Activated CD4-positive, alpha-beta memory T cell treated with anti-CD3 and anti-CD28 coated beads for 36 hours (primary cell): ENCODE measurements at regions of chr15 and their contacts with region 1.

Region 1: DNA sequence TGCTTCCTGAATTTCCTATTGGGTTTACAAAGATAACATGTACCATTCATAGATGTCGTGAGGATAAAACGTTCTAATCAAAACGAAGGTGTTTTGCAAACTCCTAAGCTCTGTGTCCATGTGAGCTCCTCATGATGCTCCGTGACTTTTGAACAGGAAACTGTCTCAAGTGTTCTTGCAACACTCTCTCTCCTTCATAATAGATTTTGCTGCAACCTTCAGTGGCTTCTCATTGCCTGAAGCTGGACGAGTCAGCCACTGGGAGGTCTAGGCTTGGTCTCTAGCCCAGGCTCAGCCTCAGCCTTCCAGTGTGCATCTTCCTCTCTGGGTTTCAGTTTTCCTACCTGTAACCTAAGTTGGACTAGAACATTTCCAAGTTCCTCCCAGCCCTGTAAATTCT is 18.7 kb upstream of the BCL2A1 start:
- DNase-seq: no peak
- H3K4me3 Mint-ChIP-seq: no peak overlapping the region
- H3K27ac Mint-ChIP-seq: no peak overlapping the region
- H3K4me1 Mint-ChIP-seq: peaks cover 3% of the 10 kb centered on the region
- H3K27me3 Mint-ChIP-seq: no peaks in the 10 kb centered on the region

Region 2: GRCh38 chr15:79769069-79769481 is 220.6 kb before region 1 on chr15:
- CTCF ChIA-PET with region 1: no interaction called
- POLR2A ChIA-PET with region 1: no interaction called
- intact Hi-C with region 1: loop called (anchors 2 kb)
- DNase-seq: peak; percentile 10
- H3K4me3 Mint-ChIP-seq: no peak overlapping the region
- H3K27ac Mint-ChIP-seq: no peak overlapping the region
- H3K4me1 Mint-ChIP-seq: no peaks in the 10 kb centered on the region
- H3K27me3 Mint-ChIP-seq: peaks cover 2% of the 10 kb centered on the region

Region 3: DNA sequence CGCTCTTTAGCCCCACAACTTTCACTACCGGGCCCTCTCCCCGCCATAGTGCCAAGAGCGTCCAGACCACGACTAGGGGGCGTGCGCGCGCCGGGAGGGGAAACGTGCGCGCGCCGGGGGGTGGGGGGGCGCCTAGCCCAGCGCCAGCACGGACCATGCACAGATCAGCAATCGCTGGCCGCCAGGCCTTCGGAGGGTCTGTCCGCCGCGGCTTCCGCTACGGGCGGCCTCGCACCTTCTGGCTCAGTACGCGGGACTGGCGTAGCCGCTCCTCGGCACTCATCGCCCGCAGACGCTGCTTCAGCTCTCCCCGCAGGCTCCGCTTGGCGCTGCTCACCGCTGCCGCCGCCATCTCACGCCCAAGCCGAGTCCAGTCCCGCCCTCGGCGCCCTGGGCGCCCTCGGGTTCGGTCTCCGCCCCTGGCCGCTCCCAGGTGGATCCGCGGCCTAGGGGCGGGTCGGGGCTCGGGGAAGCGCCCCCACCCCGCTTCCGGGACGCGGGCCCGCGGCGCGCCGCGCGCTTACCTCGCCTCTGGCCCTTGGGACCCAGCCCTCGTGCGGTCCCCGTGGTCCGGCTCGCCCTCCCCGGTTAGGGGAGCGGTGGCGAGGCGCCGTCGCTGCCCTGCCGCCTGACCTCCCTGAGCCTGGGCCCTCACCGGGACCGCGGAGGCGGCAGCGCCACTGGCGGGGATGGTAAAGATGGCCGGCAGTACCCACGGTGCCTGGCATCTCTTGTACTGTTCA is 92.9 kb before region 1 on chr15 and contains the start of gene MTHFS:
- CTCF ChIA-PET with region 1: interaction called, 26 read pairs
- POLR2A ChIA-PET with region 1: interaction called, 3 read pairs
- intact Hi-C with region 1: loop called (anchors 1 kb)
- DNase-seq: peak; percentile 83
- H3K4me3 Mint-ChIP-seq: peak within 1 kb of the TSS; percentile 97
- H3K27ac Mint-ChIP-seq: peak within 1 kb of the TSS; percentile 99
- H3K4me1 Mint-ChIP-seq: peaks cover 45% of the 10 kb centered on the region
- H3K27me3 Mint-ChIP-seq: no peaks in the 10 kb centered on the region
- total RNA-seq, gene MTHFS: 46.2 to 49.4 TPM

Region 4: DNA sequence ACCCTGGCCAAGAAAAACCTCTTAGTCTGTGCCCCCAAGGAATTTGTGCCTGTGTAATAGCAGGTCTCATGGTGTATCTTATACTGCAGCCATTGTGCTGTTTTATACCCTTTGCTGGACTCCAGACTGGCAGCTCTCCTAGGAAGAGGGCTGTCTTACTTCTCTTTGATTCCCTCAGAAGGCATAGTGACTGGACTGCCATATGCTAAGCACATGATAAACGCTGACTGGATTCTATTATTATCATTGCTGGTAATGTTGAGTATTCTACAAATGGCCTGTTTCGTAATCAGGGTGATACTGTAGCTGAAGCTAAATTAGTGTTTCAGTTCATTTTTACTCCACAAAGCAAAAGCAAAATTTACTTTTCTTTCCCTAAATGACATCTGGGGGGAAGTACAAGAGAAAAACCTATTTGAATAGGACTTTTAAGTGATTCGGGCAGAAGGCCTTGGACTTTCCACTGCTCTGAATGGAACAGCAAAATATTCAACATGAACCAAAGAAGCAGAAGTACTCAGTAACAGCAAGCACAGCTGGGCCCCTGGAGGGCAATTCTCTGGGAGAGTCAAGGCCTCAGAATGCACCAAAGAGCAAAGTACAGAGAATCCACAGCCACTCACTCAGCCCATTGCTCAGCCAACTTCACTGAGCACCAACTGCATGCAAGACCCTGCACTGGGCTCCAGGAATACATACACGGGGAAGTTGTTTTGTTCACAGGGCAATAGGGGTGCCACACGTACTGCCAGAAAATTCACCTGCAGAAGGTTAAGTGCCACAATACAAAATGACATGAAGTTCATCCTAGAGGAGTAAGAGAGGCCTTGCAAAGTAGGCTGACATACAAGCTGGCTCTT is 10.8 kb before region 1 on chr15:
- CTCF ChIA-PET with region 1: interaction called, 8 read pairs
- POLR2A ChIA-PET with region 1: no interaction called
- intact Hi-C with region 1: loop called (anchors 2 kb)
- DNase-seq: peak; percentile 44
- H3K4me3 Mint-ChIP-seq: peak overlapping the region; percentile 4
- H3K27ac Mint-ChIP-seq: peak overlapping the region; percentile 82
- H3K4me1 Mint-ChIP-seq: peaks cover 36% of the 10 kb centered on the region
- H3K27me3 Mint-ChIP-seq: no peaks in the 10 kb centered on the region

Region 5: DNA sequence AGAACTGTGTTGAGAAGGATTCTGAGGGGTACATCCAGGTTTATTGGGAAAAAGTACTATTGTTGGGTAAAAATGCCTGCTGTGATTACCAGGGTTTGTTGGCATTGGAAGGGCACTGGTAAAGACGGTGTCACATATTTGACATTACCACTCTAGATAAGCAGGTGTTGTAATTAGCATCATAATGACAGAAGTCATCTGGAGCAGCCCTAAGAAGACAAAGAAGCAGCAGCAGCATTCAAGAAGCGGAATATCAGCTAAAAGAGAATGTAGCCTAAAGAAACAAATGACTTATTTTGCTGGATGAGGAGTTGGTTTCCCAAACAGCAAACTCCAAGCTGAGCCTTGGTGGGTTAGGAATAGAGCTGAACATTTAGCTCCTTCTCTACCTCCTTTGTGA is 39.3 kb after region 1 on chr15:
- CTCF ChIA-PET with region 1: no interaction called
- POLR2A ChIA-PET with region 1: no interaction called
- intact Hi-C with region 1: no loop called
- DNase-seq: no peak
- H3K4me3 Mint-ChIP-seq: no peak overlapping the region
- H3K27ac Mint-ChIP-seq: no peak overlapping the region
- H3K4me1 Mint-ChIP-seq: peaks cover 35% of the 10 kb centered on the region
- H3K27me3 Mint-ChIP-seq: no peaks in the 10 kb centered on the region